ENCODE measurements at regions of chr12 and their contacts with region 1.

Region 1: DNA sequence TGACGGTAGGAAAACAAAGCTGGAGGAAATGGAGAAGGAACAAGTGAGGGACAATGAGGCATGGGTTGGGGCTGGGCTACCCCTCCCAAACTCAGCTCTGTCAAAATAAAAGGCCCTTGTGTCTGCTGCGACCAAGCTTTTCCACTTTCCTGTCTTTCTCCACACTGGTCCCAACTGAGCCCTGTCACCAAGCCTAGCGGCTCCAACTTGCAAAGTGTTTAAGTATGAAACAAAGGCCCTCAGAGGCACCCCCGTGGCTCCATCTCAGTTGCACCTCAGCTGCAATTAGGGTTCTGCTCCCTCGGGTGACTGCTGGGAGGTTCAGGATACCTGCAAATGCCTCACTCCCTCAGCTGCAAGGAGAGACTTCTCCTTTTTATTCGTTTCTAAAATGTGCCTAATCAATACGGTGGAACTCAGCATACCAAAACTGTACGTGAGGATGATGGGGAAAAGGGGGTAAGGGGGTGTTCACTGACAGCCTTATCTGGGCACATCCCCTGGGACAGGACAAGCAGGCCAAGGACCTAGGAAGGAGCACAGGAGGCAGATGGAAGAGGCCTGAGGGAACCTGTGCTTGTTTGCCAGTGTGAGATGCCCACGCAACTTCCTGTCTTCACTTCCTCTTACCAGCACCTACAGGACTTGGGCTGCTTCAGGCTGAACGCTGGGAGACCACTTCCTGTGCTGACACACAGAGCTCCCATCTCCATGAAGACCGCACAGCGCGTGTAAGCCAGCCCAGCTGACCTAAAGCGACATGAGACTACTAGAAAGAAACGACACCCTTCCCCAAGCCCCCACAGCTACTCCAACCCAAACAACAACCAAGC is 8.9 kb downstream of the VAMP1 start:
- DNase-seq: peak; percentile 67 to 91 (median 71)
- ATAC-seq: peak; percentile 82
- H3K4me3 ChIP-seq: no peak overlapping the region
- H3K4me1 ChIP-seq: peaks cover 3% of the 10 kb centered on the region
- CTCF ChIP-seq: no peak

Region 2: GRCh38 chr12:6423267-6424007 is 38.2 kb before region 1 on chr12:
- intact Hi-C with region 1: loop called in 1 of 2 experiments (anchors 5 kb)
- DNase-seq: peak; percentile 79 to 87 (median 81)
- ATAC-seq: peak; percentile 98
- H3K4me3 ChIP-seq: no peak overlapping the region
- H3K4me1 ChIP-seq: peaks cover 11% of the 10 kb centered on the region
- CTCF ChIP-seq: peak; percentile 76